A549 (cell line): ENCODE measurements at regions of chr12 and their contacts with region 1.

Region 1: DNA sequence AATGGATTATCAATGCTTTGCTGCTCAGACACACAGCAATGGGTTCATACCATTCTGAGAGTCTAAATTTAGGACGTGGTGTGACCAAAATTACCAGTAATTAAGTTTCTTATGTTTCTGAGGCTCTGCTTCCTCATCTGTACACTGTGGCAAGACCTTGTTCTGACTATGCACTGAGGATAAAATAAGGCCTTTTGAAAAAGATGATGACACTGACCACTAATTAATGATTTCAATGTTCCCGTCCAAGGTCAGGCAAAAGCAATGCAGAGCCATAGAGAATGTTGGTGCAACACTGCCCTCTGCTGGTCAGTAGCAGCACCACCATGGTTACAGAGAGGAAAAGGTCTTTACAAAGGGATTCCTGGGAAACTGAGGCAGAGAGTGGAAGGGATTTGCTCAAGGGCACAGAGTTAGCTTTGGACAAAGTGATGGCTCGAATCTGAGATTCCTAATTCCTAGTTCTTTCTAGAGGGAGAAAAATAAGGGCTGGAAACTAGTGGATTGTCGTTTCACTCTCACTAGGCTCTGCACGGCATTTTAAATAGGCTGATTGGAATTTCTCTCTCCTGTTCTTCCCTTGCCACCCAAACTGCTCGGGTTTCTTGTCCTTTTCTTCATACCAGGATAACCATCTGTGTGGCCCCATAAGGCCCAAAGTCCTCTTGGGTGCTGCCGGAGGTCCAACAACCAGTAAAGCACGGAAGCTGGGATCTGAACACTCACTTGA is 22.3 kb upstream of the P2RX7 start:
- DNase-seq: peak; percentile 54 to 74
- ATAC-seq: peak; percentile 72 to 88; a peak in 4 of 6 replicates
- H3K4me3 ChIP-seq: no peak overlapping the region
- H3K27ac ChIP-seq: no peak overlapping the region
- H3K4me1 ChIP-seq: no peaks in the 10 kb centered on the region
- CTCF ChIP-seq: peak; percentile 97
- EP300 ChIP-seq: no peak
- POLR2A ChIP-seq: no peak
- RAD21 ChIP-seq: peak; percentile 89 to 95

Region 2: DNA sequence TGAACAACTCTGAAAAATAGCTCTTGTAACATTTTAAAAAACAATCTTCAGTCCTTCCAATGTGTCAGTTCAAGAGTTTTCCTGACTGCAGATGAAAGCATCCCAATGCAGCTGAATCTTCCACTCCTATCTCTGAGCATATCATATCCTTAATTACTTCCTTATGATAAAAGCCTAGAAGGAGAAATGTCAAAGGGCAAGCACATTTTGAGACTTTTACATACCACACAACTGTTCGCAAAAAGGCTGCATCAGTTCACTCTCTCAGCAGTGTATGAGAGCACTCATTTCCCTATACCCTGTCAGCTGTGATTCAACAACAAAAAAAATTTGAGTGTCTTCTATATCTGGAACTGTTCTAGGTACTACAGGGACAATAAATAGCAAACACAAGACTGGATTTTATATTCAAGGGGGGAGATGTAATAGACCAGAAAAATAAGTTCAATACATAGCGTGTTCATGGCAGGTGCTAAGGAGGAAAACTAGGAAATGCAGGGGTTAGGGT is 318.7 kb before region 1 on chr12:
- CTCF ChIA-PET with region 1: no interaction called
- POLR2A ChIA-PET with region 1: no interaction called
- DNase-seq: no peak
- ATAC-seq: no peak
- H3K4me3 ChIP-seq: no peak overlapping the region
- H3K27ac ChIP-seq: no peak overlapping the region
- H3K4me1 ChIP-seq: no peaks in the 10 kb centered on the region
- CTCF ChIP-seq: no peak
- EP300 ChIP-seq: no peak
- POLR2A ChIP-seq: no peak
- RAD21 ChIP-seq: no peak

Region 3: DNA sequence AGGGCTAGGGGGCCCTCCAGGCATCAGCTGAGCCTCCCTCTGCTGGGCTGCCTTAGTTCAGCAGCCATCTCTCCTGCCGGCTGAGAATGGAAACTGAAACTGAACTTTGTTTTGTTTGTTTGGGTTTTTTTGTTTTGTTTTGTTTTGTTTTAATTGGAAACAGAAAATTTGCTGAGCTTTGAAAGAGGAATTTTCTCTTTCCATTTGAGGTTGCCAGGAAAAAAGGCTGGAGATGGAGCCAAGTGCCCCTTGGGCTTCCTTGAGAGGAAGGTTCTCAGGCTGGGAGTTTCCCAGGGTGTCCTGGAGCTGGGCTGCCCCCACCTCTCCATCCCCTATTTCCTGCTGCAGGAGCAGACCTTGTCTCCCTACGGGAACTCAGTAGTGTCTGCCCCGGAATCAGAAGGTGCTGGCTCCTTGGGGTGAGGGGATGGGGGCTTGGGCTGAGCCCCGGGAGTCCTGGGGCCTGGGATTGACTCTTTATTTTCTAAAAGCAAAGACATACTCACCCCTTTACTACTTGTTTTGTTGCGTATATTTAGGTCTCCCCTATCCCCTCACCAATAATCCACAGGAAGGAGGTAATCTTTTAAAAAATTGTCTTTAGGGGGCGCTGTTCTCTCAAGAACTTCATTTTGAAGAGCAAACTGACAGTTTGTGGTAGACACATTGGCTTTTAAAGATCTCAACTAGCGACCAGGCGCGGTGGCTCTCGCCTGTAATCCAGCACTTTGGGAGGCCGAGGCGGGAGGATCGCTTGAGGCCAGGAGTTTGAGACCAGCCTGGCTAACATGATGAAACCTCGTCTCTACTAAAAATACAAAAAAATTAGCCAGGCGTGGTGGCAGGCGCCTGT is 50.0 kb before region 1 on chr12:
- CTCF ChIA-PET with region 1: interaction called, 26 read pairs
- POLR2A ChIA-PET with region 1: no interaction called
- DNase-seq: peak; percentile 38 to 76
- ATAC-seq: peak; percentile 86 to 88
- H3K4me3 ChIP-seq: 0 out of 3 replicates have a peak overlapping the region, but pooled peaks have one; percentile 11
- H3K27ac ChIP-seq: peak overlapping the region; percentile 48 to 84; a peak in 5 of 6 replicates
- H3K4me1 ChIP-seq: peaks cover 6% of the 10 kb centered on the region; the same call in 1 of the 3 replicates
- CTCF ChIP-seq: peak; percentile 68
- EP300 ChIP-seq: no peak
- POLR2A ChIP-seq: no peak
- RAD21 ChIP-seq: peak; percentile 61 to 67

Region 4: GRCh38 chr12:121095544-121096198 is 14.7 kb before region 1 on chr12:
- CTCF ChIA-PET with region 1: interaction called, 23 read pairs
- POLR2A ChIA-PET with region 1: no interaction called
- DNase-seq: peak; percentile 64 to 96
- ATAC-seq: peak; percentile 97 to 98
- H3K4me3 ChIP-seq: peak overlapping the region; percentile 39
- H3K27ac ChIP-seq: peak overlapping the region; percentile 7 to 68; a peak in 4 of 6 replicates
- H3K4me1 ChIP-seq: peaks cover 8% of the 10 kb centered on the region; the same call in 1 of the 3 replicates
- CTCF ChIP-seq: peak; percentile 86
- EP300 ChIP-seq: no peak
- POLR2A ChIP-seq: no peak
- RAD21 ChIP-seq: peak; percentile 76 to 78

Region 5: DNA sequence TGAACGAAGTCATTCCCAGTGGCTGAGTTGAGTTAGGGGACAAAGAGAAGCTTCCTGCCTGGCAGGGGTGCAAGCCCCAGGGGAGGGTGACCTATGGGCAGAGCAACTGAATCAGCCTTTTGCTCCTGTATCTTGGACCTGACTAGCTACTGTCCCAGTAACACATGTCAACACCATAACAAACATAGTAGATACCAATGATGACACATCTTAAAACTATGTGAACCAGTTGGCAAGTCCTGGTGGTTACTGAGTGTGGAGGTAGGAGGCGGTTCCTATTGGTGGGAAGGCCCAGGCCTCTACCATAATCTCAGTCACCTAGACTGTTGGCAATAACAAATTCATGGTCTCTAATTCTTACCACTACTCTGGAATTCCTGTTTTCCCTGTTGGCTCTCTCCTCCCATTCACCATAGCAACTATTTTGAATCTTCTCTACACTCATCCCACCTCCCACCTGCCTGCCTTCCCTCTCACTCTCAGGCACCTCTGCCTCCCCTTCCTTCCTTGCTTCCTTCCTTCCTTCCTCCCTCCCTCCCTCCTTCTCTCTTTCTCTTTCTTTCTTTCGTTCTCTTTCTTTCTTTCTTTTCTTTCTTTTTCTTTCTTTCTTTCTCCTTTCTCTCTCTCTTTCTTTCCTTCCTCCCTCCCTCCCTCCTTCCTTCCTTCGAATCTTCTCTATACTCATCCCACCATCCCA is 14.2 kb after region 1 on chr12:
- CTCF ChIA-PET with region 1: interaction called, 45 read pairs
- POLR2A ChIA-PET with region 1: no interaction called
- DNase-seq: peak; percentile 93 to 95
- ATAC-seq: peak; percentile 91 to 93
- H3K4me3 ChIP-seq: no peak overlapping the region
- H3K27ac ChIP-seq: 0 out of 6 replicates have a peak overlapping the region, but pooled peaks of 1 of the 2 experiments have one; percentile 39
- H3K4me1 ChIP-seq: peaks cover 13% of the 10 kb centered on the region; the same call in 2 of the 3 replicates
- CTCF ChIP-seq: no peak
- EP300 ChIP-seq: no peak
- POLR2A ChIP-seq: no peak
- RAD21 ChIP-seq: no peak

Region 6: GRCh38 chr12:121165316-121165715 is 54.9 kb after region 1 on chr12:
- CTCF ChIA-PET with region 1: no interaction called
- POLR2A ChIA-PET with region 1: no interaction called
- DNase-seq: no peak
- ATAC-seq: no peak
- H3K4me3 ChIP-seq: no peak overlapping the region
- H3K27ac ChIP-seq: no peak overlapping the region
- H3K4me1 ChIP-seq: no peaks in the 10 kb centered on the region
- CTCF ChIP-seq: no peak
- EP300 ChIP-seq: no peak
- POLR2A ChIP-seq: no peak
- RAD21 ChIP-seq: no peak

Region 7: DNA sequence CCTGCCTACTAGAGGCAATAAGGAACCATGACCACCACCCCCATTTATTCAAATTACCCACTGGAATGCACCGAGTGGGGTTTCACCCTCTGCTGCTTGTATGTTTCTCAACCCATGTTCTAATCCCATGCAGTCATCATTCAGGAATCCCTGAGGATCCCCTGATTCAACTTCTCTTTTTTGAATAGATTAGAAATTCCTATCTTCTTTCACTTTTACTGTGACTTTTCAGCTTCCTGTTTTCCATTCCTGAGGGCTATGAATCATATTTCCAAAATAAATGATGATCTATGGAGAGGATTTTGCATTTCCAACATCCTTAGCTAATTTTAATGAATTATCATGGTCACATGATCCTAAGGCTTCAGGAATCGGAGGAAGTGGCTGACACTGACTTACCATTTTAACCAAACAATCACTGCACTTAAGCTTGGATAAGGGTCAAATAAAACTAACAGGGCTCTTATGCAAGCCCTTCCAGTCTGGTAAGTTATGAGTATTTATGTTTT is 80.2 kb after region 1 on chr12:
- CTCF ChIA-PET with region 1: no interaction called
- POLR2A ChIA-PET with region 1: no interaction called
- DNase-seq: no peak
- ATAC-seq: peak in 1 of 2 experiments; percentile 52; a peak in 2 of 6 replicates
- H3K4me3 ChIP-seq: no peak overlapping the region
- H3K27ac ChIP-seq: no peak overlapping the region
- H3K4me1 ChIP-seq: no peaks in the 10 kb centered on the region
- CTCF ChIP-seq: no peak
- EP300 ChIP-seq: no peak
- POLR2A ChIP-seq: no peak
- RAD21 ChIP-seq: no peak

Region 8: DNA sequence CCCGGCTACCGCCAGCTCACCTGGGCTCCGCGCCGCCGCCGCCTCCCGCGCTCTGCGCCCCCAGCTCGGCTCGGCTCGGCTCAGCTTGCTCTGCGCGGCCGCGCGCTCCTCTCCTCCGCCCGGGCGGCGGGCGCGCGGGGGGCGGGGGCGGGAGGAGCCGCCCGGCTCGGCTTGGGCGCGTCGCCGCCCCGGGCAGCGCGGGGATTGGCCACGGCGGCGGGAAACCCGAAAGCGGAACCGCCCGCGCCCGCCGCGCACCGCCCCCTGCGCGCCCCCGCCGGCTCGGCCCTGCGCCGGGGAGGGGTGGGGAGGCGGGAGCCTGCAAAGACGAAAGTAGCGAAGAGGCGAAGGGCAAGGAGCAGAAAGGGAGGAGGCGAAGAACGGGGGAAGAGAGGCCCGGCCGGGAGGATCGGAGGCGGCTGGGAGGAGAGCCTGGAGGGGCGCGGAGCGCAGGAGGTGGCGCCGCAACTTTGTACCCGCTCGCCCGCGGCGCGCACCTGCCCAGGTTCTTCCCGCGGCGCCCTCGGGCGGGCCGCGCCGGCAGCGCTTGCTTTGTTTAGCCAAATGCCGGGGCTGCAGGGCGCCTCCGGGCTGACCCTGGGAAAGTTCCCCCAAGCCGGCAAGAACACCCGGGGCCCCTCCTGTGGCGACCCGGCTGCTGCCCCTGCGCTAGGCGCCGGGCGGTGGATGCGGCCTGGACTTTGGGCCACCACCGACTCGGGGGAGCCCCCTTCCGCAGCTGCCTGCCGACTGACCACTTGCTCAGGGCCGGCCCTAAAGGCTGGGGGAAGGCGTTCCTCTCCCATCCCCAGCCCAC is 186.4 kb after region 1 on chr12 and contains the start of gene CAMKK2:
- CTCF ChIA-PET with region 1: no interaction called
- POLR2A ChIA-PET with region 1: no interaction called
- DNase-seq: peak; percentile 80 to 81
- ATAC-seq: peak; percentile 80
- H3K4me3 ChIP-seq: peak within 1 kb of the TSS; percentile 97
- H3K27ac ChIP-seq: peak within 1 kb of the TSS; percentile 91 to 95
- H3K4me1 ChIP-seq: peaks cover 13% of the 10 kb centered on the region
- CTCF ChIP-seq: peak; percentile 24; the same call in 1 of the 3 replicates
- EP300 ChIP-seq: no peak
- POLR2A ChIP-seq: peak; percentile 38
- RAD21 ChIP-seq: no peak
- polyA plus RNA-seq, gene CAMKK2: 24.8 and 25.9 TPM in 2 replicates